Colonic mucosa (tissue), 4 donors: ENCODE measurements at regions of chr20 and their contacts with region 1.

Region 1: DNA sequence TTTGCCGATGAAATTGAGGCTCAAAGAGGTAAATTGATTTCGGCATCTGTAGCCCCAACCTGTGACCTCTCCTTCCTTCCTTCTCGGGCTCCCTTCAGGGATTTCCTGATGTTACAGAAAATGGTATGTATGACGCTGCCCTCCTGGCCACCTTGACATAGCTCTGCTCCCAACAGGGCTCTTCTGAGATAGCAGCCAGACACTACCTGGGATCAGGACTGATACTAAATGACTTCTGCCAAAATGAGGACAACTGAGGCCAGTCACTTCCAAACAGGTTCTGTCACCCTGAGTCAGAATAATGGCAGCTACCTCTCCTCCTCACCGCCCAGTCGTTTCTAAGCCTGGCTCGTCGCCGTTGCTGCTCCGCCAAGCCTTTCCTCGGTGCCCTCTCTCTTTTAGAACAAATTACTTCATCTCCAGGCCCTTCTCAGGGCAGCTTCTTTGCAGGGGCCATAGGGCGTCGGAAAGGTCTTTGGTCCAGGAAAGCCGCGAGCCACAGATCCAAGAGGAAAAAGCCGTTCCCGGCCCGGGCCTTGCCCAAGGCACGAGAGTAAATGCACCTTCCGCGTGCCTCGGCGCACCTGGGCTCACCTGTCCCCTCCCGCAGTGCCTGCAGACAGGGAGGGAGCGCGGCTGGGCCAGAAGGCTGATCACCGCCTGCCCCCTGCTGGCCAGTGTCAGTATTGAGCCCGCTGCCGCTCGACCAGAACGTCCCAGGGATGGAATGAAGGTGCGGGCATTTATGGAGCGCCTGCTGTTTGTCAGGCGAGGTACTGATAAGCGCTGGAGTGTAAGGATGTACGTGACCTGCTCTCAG is 904 bp upstream of the LPIN3 start:
- DNase-seq: peak; percentile 96
- H3K4me3 ChIP-seq: peak overlapping the region; percentile 36
- H3K27ac ChIP-seq: peak overlapping the region; percentile 87
- H3K4me1 ChIP-seq: no peaks in the 10 kb centered on the region
- H3K27me3 ChIP-seq: no peaks in the 10 kb centered on the region
- CTCF ChIP-seq: peak; percentile 99

Region 2: GRCh38 chr20:40962730-40963504 is 376.8 kb before region 1 on chr20:
- intact Hi-C with region 1: loop called (anchors 10 kb)
- DNase-seq: peak; percentile 74
- H3K4me3 ChIP-seq: no peak overlapping the region
- H3K27ac ChIP-seq: no peak overlapping the region
- H3K4me1 ChIP-seq: no peaks in the 10 kb centered on the region
- H3K27me3 ChIP-seq: no peaks in the 10 kb centered on the region
- CTCF ChIP-seq: peak; percentile 87

Region 3: DNA sequence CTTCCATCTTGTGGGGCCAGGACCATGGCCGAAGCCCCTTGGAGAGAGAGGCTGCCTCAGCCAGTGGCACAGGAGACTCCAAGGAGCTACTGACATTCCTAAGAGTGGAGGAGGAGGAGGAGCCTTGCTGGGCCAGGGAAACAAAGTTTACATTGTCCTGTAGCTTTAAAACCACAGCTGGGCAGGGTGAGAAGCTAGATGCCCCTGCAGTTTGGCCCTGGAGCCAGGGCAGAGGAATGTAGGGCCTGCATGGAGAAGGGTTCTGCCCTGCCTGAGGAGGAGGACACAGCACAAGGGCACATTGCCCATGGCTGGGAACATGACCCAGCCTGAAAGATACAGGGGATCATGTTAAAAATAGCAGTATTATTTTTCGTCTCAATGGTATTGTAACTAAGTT is 164.9 kb before region 1 on chr20:
- intact Hi-C with region 1: loop called (anchors 1 kb)
- DNase-seq: peak; percentile 11
- H3K4me3 ChIP-seq: no peak overlapping the region
- H3K27ac ChIP-seq: no peak overlapping the region
- H3K4me1 ChIP-seq: no peaks in the 10 kb centered on the region
- H3K27me3 ChIP-seq: no peaks in the 10 kb centered on the region
- CTCF ChIP-seq: no peak

Region 4: DNA sequence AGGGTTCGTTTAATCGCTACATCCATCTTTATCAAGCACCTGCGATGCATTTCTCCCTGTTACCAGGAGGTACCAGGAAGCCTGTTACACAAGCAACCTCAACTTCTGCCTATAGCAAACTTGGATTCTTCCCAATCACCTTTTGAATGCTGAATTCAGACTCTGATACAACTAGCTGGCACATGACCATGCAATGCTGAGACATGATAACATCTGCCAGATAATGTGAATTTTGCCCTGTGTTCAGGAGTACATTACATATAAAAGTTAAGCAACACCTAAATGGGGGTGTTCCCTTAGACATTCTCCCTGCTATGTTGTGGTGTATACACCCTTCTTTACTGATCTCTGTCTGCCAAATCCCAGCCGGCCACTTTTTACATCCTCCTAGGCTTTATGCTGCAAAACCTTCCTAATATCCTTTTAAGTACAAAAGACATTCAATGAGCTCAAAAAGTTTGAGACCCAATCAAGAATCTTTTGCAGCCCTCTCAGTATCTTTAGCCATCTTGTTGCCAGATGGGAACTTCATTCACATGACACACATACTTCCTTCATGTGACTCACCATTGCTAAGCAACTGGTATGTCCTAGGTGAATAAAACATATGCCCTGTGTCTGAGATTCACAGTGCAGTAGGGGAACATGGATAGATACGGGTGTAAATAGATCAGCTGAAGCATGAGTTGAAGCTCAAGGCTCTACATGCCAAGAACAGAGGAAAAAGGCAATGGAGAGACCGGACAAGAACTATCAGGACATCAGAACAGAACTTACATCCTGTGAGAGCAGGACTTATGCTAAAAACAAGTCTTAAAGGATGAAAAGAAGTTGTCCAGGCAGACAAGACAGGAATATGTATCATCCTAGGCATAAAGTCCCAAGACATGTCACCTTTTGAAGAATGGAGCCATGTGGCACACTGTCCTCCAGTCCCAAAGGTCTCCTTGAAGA is 106.5 kb before region 1 on chr20:
- intact Hi-C with region 1: loop called (anchors 5 kb)
- DNase-seq: no peak
- H3K4me3 ChIP-seq: no peak overlapping the region
- H3K27ac ChIP-seq: no peak overlapping the region
- H3K4me1 ChIP-seq: no peaks in the 10 kb centered on the region
- H3K27me3 ChIP-seq: no peaks in the 10 kb centered on the region
- CTCF ChIP-seq: no peak

Region 5: GRCh38 chr20:41275301-41275731 is 64.4 kb before region 1 on chr20:
- intact Hi-C with region 1: no loop called
- DNase-seq: no peak
- H3K4me3 ChIP-seq: no peak overlapping the region
- H3K27ac ChIP-seq: peak overlapping the region; percentile 19
- H3K4me1 ChIP-seq: no peaks in the 10 kb centered on the region
- H3K27me3 ChIP-seq: no peaks in the 10 kb centered on the region
- CTCF ChIP-seq: no peak

Region 6: DNA sequence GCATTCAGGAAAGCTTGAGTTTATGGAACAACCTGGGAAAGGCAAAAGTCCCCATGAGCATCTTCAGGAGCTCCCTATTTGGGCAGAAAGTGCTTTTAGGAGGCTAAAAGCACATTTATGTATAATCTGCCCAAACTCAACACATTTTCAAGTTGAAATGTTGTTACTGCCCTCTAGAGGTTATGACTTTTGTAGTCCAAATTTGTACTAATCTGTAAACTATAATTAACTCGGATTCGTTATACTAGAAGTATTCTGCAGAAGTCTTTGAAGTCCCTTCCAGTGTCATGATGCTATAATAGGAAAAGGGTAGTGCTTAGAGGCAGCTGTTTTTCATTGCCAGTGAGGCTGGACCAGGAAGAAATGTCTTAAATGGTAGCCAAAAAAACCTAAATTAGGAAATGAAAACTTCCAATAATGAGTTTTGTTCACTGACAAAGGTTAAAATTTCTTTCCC is 71.7 kb after region 1 on chr20:
- intact Hi-C with region 1: loop called (anchors 5 kb)
- DNase-seq: no peak
- H3K4me3 ChIP-seq: no peak overlapping the region
- H3K27ac ChIP-seq: no peak overlapping the region
- H3K4me1 ChIP-seq: no peaks in the 10 kb centered on the region
- H3K27me3 ChIP-seq: no peaks in the 10 kb centered on the region
- CTCF ChIP-seq: no peak

Region 7: GRCh38 chr20:41798930-41799502 is 459.3 kb after region 1 on chr20:
- intact Hi-C with region 1: no loop called
- DNase-seq: no peak
- H3K4me3 ChIP-seq: no peak overlapping the region
- H3K27ac ChIP-seq: no peak overlapping the region
- H3K4me1 ChIP-seq: no peaks in the 10 kb centered on the region
- H3K27me3 ChIP-seq: no peaks in the 10 kb centered on the region
- CTCF ChIP-seq: no peak